Activated T-helper 1 cell treated with anti-CD3 and anti-CD28 coated beads, Interleukin-12 subunit alpha, Interleukin-12 subunit beta, Interleukin-2, Interleukin-4 antibody, amounts not matched to agents 30 ng/mL and 10 ng/mL and 1 ng/mL, durations not matched to agents 14 hours and 24 hours and 36 hours (primary cell): ENCODE measurements at regions of chr5 and their contacts with region 1.

Region 1: GRCh38 chr5:134225618-134226440 is at the start of gene PPP2CA:
- DNase-seq: peak; percentile 99
- H3K4me3 Mint-ChIP-seq: peak within 1 kb of the TSS; percentile 94
- H3K27ac Mint-ChIP-seq: peak within 1 kb of the TSS; percentile 97
- H3K4me1 Mint-ChIP-seq: peaks cover 46% of the 10 kb centered on the region
- H3K27me3 Mint-ChIP-seq: no peaks in the 10 kb centered on the region
- total RNA-seq, gene PPP2CA: 181 and 183 TPM in 2 replicates

Region 2: GRCh38 chr5:132655821-132656773 is 1569.7 kb before region 1 on chr5:
- intact Hi-C with region 1: no loop called
- DNase-seq: no peak
- H3K4me3 Mint-ChIP-seq: peak overlapping the region; percentile 76
- H3K27ac Mint-ChIP-seq: peak overlapping the region; percentile 87
- H3K4me1 Mint-ChIP-seq: peaks cover 71% of the 10 kb centered on the region
- H3K27me3 Mint-ChIP-seq: peaks cover 19% of the 10 kb centered on the region

Region 3: DNA sequence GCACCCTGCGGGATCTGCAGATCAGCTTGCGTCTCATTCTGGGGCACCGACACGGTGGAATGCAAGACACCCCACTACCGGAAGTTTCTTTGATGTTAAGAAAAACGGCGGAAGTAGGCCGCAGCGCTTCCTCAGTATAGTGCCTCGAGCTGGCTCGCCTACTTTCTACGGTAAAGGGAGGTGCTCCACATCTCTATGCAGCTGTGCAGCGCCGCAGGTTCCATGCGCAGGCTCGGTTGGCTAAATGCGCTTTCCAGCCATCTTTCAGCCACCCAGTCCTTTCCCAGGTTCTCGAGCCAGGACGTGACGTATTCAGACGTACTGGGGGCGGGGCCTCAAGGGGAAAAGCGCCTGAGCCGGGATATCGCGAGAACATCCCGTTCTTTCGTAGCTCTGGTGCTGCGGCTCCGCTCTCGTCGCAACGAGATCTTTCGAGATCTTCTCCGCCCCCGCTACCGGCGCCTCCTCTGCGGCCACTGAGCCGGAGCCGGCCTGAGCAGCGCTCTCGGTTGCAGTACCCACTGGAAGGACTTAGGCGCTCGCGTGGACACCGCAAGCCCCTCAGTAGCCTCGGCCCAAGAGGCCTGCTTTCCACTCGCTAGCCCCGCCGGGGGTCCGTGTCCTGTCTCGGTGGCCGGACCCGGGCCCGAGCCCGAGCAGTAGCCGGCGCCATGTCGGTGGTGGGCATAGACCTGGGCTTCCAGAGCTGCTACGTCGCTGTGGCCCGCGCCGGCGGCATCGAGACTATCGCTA is 1174.1 kb before region 1 on chr5 and contains the start of gene HSPA4:
- intact Hi-C with region 1: loop called (anchors 5 kb)
- DNase-seq: peak; percentile 96
- H3K4me3 Mint-ChIP-seq: peak within 1 kb of the TSS; percentile 96
- H3K27ac Mint-ChIP-seq: peak within 1 kb of the TSS; percentile 100
- H3K4me1 Mint-ChIP-seq: peaks cover 46% of the 10 kb centered on the region
- H3K27me3 Mint-ChIP-seq: peaks cover 2% of the 10 kb centered on the region
- total RNA-seq, gene HSPA4: 244 and 247 TPM in 2 replicates

Region 4: GRCh38 chr5:134176511-134177368 is 49.1 kb before region 1 on chr5 and contains the start of gene SKP1:
- intact Hi-C with region 1: loop called (anchors 1 kb)
- DNase-seq: peak; percentile 85
- H3K4me3 Mint-ChIP-seq: peak within 1 kb of the TSS; percentile 96
- H3K27ac Mint-ChIP-seq: peak within 1 kb of the TSS; percentile 97
- H3K4me1 Mint-ChIP-seq: peaks cover 28% of the 10 kb centered on the region
- H3K27me3 Mint-ChIP-seq: peaks cover 6% of the 10 kb centered on the region
- total RNA-seq, gene SKP1: 259 and 265 TPM in 2 replicates

Region 5: DNA sequence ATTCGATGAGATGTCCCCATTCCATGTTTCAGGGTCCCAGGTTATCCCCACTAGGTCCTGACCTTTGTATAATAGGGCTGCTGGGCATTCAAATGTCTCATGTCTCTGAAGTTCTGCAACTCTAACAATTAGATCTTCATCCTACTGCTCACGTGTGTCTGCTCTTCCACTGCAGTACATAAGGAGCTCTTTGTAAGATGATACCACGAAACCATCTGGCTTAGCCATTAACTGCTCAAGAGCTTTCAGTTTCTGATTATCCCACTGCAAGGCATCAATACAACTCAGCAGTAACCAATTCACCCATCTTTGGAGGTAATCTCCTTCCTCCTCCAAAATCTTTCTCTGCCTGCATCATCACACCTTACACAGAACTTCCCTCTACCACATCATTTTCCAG is 50.0 kb after region 1 on chr5:
- intact Hi-C with region 1: no loop called
- DNase-seq: no peak
- H3K4me3 Mint-ChIP-seq: no peak overlapping the region
- H3K27ac Mint-ChIP-seq: no peak overlapping the region
- H3K4me1 Mint-ChIP-seq: no peaks in the 10 kb centered on the region
- H3K27me3 Mint-ChIP-seq: peaks cover 7% of the 10 kb centered on the region

Region 6: DNA sequence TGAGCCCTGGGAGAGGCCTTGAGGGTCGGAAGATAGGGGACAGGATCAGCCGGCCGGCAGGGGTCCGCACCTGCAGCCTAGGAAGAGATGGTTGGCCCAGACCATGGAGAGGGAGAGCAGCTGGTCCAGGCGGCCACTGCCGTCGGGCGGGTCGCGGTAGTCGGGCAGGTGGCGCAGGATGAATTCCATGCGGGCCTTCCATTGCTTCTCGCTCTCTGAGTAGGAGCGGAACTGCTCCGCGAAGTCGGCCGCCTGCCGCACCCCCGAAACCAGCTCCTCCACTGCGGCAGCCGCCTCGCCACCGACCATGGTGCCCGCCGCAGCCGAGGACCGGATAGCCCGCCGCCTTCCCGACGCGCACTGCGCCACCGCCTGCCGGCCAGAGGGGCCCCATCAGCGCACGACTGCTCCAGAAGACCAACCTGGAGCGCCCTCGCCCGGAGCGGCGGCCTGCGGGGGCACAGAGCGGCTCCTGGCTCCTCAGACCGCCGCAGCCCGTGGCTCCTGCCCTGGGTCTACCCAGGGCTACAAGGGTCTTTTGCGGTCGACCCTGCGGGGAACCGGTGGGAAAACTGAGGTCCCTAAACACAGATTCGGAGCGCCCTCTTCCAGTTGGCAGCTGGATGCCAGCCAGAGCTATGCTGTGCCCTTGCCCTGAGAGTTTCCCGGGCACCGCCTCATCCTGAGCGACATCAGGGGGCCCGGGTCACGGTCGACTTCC is 185.9 kb after region 1 on chr5 and contains the start of gene CDKN2AIPNL:
- intact Hi-C with region 1: loop called (anchors 1 kb)
- DNase-seq: peak; percentile 87
- H3K4me3 Mint-ChIP-seq: peak within 1 kb of the TSS; percentile 97
- H3K27ac Mint-ChIP-seq: peak within 1 kb of the TSS; percentile 90
- H3K4me1 Mint-ChIP-seq: peaks cover 26% of the 10 kb centered on the region
- H3K27me3 Mint-ChIP-seq: no peaks in the 10 kb centered on the region
- total RNA-seq, gene CDKN2AIPNL: 33.6 and 35.6 TPM in 2 replicates

Region 7: DNA sequence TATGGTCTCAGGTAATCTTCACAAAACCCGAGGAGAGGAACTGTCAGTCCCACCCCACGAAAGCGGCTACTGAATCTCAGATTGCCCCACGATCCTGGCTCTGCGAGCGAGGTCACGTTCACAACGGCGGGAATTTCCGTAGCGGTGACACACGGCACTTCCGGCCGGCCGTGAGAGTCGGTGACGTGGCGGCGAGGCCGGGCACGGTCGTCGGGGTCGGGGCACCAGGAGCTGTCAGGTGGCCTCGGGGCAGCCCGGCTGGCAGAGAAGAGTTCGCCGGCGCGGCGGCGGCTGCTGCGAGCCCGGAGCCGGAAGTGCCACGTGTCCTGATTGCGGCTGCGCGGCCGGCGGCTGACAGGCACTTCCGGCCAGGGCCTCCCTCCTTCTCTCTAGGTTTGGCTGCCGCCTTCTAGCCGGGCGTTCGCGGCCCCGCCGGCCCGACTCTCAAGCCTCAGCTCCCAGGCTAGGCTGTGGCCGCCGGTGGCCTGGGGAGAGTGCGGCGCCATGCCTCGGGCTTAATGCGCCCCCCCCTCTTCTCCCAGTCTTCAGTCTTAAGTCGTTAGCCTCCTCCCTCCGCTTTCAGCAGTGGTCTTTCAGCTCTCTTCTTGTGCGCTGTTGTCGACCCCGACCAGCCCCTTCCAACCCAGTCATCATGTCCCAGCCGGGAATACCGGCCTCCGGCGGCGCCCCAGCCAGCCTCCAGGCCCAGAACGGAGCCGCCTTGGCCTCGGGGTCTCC is 422.8 kb after region 1 on chr5 and contains the start of gene SEC24A:
- intact Hi-C with region 1: loop called (anchors 1 kb)
- DNase-seq: peak; percentile 89
- H3K4me3 Mint-ChIP-seq: peak within 1 kb of the TSS; percentile 87
- H3K27ac Mint-ChIP-seq: peak within 1 kb of the TSS; percentile 94
- H3K4me1 Mint-ChIP-seq: peaks cover 32% of the 10 kb centered on the region
- H3K27me3 Mint-ChIP-seq: no peaks in the 10 kb centered on the region
- total RNA-seq, gene SEC24A: 26.5 and 27.2 TPM in 2 replicates

Region 8: GRCh38 chr5:134873987-134874830 is 648.4 kb after region 1 on chr5 and contains the start of gene TXNDC15:
- intact Hi-C with region 1: loop called (anchors 10 kb)
- DNase-seq: peak; percentile 82
- H3K4me3 Mint-ChIP-seq: peak within 1 kb of the TSS; percentile 100
- H3K27ac Mint-ChIP-seq: peak within 1 kb of the TSS; percentile 98
- H3K4me1 Mint-ChIP-seq: peaks cover 43% of the 10 kb centered on the region
- H3K27me3 Mint-ChIP-seq: no peaks in the 10 kb centered on the region
- total RNA-seq, gene TXNDC15: 57.1 and 67.2 TPM in 2 replicates